Caco-2 (cell line): ENCODE measurements at regions of chr2 and their contacts with region 1.

Region 1: GRCh38 chr2:44981136-44982108 is 27.8 kb downstream of the SIX2 start:
- DNase-seq: peak; percentile 68 to 82
- H3K4me3 ChIP-seq: no peak overlapping the region
- H3K4me3 Mint-ChIP-seq: no peak overlapping the region
- H3K27ac Mint-ChIP-seq: no peak overlapping the region
- H3K4me1 ChIP-seq: no peaks in the 10 kb centered on the region
- H3K4me1 Mint-ChIP-seq: no peaks in the 10 kb centered on the region
- H3K27me3 ChIP-seq: no peaks in the 10 kb centered on the region
- H3K27me3 Mint-ChIP-seq: no peaks in the 10 kb centered on the region
- CTCF ChIP-seq: peak; percentile 83 to 91

Region 2: DNA sequence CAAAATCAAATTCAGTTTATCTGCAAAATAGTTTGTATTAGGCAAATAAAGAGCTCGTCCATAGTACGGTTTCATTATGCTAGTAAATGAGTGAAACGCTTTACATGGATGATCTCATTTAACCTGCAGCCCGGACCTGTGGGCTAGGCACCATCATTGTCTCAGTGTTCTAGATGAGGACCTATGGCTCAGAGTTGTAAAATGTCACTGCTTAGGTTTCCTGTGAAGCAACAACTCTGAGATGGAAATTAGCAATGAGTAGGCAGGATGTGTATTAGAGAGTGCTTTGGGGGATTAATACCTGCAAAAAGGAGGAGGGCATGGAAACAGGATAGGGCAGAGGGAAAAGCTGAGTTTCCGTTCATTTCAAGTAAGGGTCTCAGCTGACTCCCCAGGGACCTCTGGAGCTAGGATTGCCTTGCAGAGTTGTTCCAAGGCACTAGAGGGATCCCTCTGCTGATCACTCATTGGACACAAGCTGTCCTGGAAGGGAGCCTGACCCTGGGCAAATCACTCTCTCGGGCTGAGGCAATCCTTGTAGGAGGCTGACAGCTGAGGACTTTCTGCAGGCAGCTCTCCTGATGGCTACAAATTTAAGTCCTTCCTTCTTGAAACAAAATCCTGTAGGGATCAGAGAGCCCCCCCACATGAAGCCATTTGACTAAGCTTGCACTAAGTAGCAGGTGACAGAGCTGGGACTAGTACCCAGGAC is 86.6 kb after region 1 on chr2:
- CTCF ChIA-PET with region 1: no interaction called
- POLR2A ChIA-PET with region 1: no interaction called
- intact Hi-C with region 1: no loop called
- DNase-seq: peak in 1 of 2 experiments; percentile 24
- H3K4me3 ChIP-seq: no peak overlapping the region
- H3K4me3 Mint-ChIP-seq: no peak overlapping the region
- H3K27ac Mint-ChIP-seq: no peak overlapping the region
- H3K4me1 ChIP-seq: no peaks in the 10 kb centered on the region
- H3K4me1 Mint-ChIP-seq: no peaks in the 10 kb centered on the region
- H3K27me3 ChIP-seq: no peaks in the 10 kb centered on the region; the same call in 1 of the 2 replicates
- H3K27me3 Mint-ChIP-seq: peaks cover 5% of the 10 kb centered on the region
- CTCF ChIP-seq: peak in 1 of 2 experiments; percentile 33

Region 3: GRCh38 chr2:45102141-45102540 is 120.7 kb after region 1 on chr2:
- CTCF ChIA-PET with region 1: no interaction called
- POLR2A ChIA-PET with region 1: no interaction called
- intact Hi-C with region 1: no loop called
- DNase-seq: no peak
- H3K4me3 ChIP-seq: no peak overlapping the region
- H3K4me3 Mint-ChIP-seq: no peak overlapping the region
- H3K27ac Mint-ChIP-seq: no peak overlapping the region
- H3K4me1 ChIP-seq: no peaks in the 10 kb centered on the region
- H3K4me1 Mint-ChIP-seq: no peaks in the 10 kb centered on the region
- H3K27me3 ChIP-seq: no peaks in the 10 kb centered on the region; the same call in 1 of the 2 replicates
- H3K27me3 Mint-ChIP-seq: peaks cover 7% of the 10 kb centered on the region
- CTCF ChIP-seq: no peak

Region 4: GRCh38 chr2:45439788-45440773 is 458.7 kb after region 1 on chr2:
- CTCF ChIA-PET with region 1: no interaction called
- POLR2A ChIA-PET with region 1: no interaction called
- intact Hi-C with region 1: loop called (anchors 2 kb)
- DNase-seq: no peak
- H3K4me3 ChIP-seq: no peak overlapping the region
- H3K4me3 Mint-ChIP-seq: no peak overlapping the region
- H3K27ac Mint-ChIP-seq: no peak overlapping the region
- H3K4me1 ChIP-seq: peaks cover 21% of the 10 kb centered on the region
- H3K4me1 Mint-ChIP-seq: peaks cover 11% of the 10 kb centered on the region
- H3K27me3 ChIP-seq: no peaks in the 10 kb centered on the region
- H3K27me3 Mint-ChIP-seq: no peaks in the 10 kb centered on the region
- CTCF ChIP-seq: peak; percentile 11 to 42

Region 5: GRCh38 chr2:45494269-45494977 is 513.0 kb after region 1 on chr2:
- CTCF ChIA-PET with region 1: interaction called, 10 read pairs
- POLR2A ChIA-PET with region 1: no interaction called
- intact Hi-C with region 1: loop called (anchors 1 kb)
- DNase-seq: peak in 1 of 2 experiments; percentile 57
- H3K4me3 ChIP-seq: no peak overlapping the region
- H3K4me3 Mint-ChIP-seq: no peak overlapping the region
- H3K27ac Mint-ChIP-seq: no peak overlapping the region
- H3K4me1 ChIP-seq: no peaks in the 10 kb centered on the region
- H3K4me1 Mint-ChIP-seq: no peaks in the 10 kb centered on the region
- H3K27me3 ChIP-seq: no peaks in the 10 kb centered on the region
- H3K27me3 Mint-ChIP-seq: no peaks in the 10 kb centered on the region
- CTCF ChIP-seq: peak; percentile 72 to 81

Region 6: GRCh38 chr2:45578056-45578809 is 596.8 kb after region 1 on chr2:
- CTCF ChIA-PET with region 1: no interaction called
- POLR2A ChIA-PET with region 1: no interaction called
- intact Hi-C with region 1: loop called (anchors 1 kb)
- DNase-seq: peak in 1 of 2 experiments; percentile 22
- H3K4me3 ChIP-seq: no peak overlapping the region
- H3K4me3 Mint-ChIP-seq: no peak overlapping the region
- H3K27ac Mint-ChIP-seq: no peak overlapping the region
- H3K4me1 ChIP-seq: no peaks in the 10 kb centered on the region
- H3K4me1 Mint-ChIP-seq: peaks cover 13% of the 10 kb centered on the region
- H3K27me3 ChIP-seq: no peaks in the 10 kb centered on the region
- H3K27me3 Mint-ChIP-seq: no peaks in the 10 kb centered on the region
- CTCF ChIP-seq: peak in 1 of 2 experiments; percentile 45